ENCODE measurements at regions of chr6 and their contacts with region 1.

Region 1: GRCh38 chr6:106339334-106340029 is 13.9 kb upstream of the ATG5 start:
- DNase-seq: peak in 1 of 4 donors; percentile 39
- ATAC-seq: peak; percentile 96
- H3K4me3 ChIP-seq: no peak overlapping the region
- H3K27ac ChIP-seq: no peak overlapping the region
- H3K4me1 ChIP-seq: no peaks in the 10 kb centered on the region
- H3K27me3 ChIP-seq: peaks cover 0 to 5% of the 10 kb centered on the region in 2 donors
- CTCF ChIP-seq: peak; percentile 66 to 79

Region 2: GRCh38 chr6:106223300-106223930 is 116.1 kb before region 1 on chr6:
- intact Hi-C with region 1: no loop called
- DNase-seq: peak in 3 of 4 donors; percentile 40 to 68 (median 41)
- ATAC-seq: peak; percentile 84
- H3K4me3 ChIP-seq: no peak overlapping the region
- H3K27ac ChIP-seq: no peak overlapping the region
- H3K4me1 ChIP-seq: peaks cover 0 to 5% of the 10 kb centered on the region in 2 donors
- H3K27me3 ChIP-seq: no peaks in the 10 kb centered on the region
- CTCF ChIP-seq: peak; percentile 55 to 56

Region 3: DNA sequence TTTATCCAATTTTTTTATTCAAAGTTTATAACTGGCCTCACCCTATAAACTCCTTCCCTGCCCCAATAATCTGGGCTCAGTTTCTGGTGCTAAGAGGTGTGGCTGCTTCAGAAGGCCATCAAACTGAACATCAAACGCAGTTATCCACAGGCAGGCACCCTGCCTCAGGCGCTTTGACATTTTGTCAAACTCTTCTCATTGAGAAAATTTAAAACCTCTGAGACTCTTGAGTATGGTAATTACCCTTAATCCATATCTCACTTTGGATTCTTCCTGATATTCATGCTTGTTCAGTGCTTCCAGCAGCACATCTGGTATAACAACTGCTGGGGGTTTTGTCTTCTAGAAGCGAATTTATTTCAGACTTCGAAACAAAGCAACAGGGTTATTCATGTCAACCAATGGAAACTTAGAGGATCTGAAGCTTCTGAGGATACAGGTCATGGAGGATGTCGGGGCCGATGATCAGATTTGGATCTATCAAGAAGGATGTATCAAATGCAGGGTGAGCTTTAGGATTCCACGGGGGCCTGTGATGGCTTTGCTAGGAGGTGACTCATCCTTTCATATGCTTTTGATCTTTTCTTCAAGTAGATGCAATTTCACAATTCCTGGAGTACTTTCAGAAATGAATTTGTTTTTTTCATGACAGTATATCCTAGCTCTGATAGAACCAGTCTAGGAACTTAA is 221.7 kb after region 1 on chr6:
- intact Hi-C with region 1: loop called in 1 of 2 experiments (anchors 10 kb)
- DNase-seq: no peak
- ATAC-seq: peak; percentile 37
- H3K4me3 ChIP-seq: no peak overlapping the region
- H3K27ac ChIP-seq: peak overlapping the region in 1 of 2 donors; percentile 83
- H3K4me1 ChIP-seq: peaks cover 0 to 37% of the 10 kb centered on the region in 2 donors
- H3K27me3 ChIP-seq: no peaks in the 10 kb centered on the region
- CTCF ChIP-seq: no peak